Heart right ventricle (tissue), 16 donors: ENCODE measurements at regions of chr2 and their contacts with region 1.

Region 1: DNA sequence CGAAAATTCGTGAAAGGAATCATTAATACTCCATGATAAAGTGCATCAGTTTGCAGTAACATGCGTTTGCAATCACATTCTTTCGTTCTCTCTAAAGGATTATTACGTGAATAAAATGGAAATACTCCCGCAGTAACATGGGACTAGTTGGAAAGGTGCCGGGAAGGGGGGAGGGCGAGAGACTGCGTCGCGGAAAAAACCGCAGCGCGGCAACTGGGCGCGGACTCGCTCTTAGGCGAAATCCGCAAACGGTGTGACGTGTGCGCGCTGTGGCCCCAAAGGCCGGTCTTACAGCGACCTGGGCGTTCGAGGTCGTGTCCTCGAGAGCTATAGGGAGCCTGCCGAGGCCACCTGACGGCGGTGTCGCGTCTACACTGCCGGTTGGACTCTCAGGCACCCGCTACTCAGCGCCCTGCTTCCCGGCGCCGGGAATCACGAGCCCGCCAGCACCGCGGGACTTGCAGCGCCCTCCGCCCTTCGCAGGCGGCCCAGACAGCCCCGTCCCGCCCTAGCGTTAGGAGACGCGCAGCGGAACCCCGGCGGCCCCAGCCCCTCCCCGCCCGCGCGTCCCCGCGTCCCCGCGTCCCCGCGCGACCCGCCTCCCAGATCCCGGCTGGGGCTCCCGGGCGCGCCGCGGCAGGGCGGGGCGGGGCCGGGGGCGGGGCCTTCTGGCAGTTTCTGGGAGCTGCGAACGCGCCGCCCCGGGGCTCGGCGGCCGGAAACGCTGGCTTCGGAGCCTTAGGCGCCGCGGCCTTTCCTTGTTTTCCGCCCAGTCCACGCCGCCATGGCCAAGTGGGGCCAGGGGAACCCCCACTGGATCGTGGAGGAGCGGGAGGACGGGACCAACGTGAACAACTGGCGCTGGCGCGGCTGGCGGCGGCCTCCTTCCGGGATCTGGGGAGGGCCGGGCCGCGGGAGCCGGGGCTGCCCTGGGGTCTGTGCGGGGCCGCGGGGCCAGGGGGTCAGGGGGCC is 15.1 kb downstream of the C2orf74 start:
- DNase-seq: peak; percentile 94 to 97
- ATAC-seq: peak; percentile 87 to 95 (median 92)
- H3K4me3 ChIP-seq: peak overlapping the region; percentile 62 to 97 (median 86)
- H3K27ac ChIP-seq: peak overlapping the region; percentile 94 to 100 (median 98)
- H3K4me1 ChIP-seq: peaks cover 21 to 54% (median 47%) of the 10 kb centered on the region in 9 donors
- H3K27me3 ChIP-seq: no peaks in the 10 kb centered on the region
- CTCF ChIP-seq: peak in 3 of 9 donors; percentile 23 to 43 (median 34)

Region 2: DNA sequence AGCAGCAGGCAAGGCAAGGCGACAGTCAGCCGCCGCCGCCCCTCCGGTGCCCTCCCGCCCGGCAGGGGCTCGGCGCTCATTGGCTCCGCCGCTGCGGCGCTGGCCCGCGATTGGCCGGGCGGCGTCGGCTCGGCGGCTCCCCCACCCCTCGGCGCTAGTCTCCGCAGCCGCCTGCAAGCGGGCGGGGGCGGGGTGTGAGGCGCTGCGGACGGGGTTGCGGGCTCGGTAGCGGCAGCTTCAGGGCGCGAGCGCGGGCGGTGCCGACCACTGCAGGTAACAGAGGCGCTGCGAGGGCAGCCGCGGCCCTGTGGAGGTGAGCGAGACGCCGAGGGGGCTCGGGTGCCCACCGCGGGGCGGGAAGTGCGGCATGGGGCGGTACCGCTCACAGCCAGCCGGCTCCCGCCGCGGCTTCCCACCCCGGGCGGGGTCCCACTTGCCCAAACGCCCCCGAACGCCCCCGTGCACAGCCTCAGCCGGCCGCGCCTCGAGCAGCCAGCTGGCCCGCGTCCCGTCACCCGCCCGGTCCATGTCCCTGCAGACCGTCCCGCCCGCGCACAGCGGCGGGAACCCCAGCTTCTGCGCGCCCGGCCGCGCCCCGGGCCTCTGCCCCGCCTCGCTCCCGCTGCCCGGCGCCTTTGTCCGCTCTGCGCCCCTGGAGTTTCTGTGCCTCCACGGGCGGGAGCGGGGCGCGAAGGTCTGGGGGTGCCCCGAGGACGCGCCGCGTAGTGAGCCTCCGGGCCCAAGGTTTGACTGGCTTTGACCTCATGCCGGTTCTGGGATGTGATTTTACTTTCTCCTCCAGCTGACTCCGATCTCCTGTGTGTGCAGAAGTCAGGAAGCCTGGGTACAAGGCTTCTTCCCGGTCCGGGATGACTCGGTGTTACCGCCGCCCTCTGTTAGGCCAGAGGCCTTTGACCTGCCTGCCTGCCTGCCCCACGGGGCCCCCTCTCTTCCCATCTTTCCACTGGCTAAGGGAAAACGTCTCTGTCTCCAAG is 111.0 kb before region 1 on chr2 and contains the start of gene SANBR:
- intact Hi-C with region 1: loop called in 1 of 10 experiments (anchors 10 kb)
- DNase-seq: peak; percentile 85 to 88
- ATAC-seq: peak; percentile 98 to 99 (median 98)
- H3K4me3 ChIP-seq: peak within 1 kb of the TSS; percentile 73 to 98 (median 88)
- H3K27ac ChIP-seq: peak within 1 kb of the TSS; percentile 48 to 92 (median 87)
- H3K4me1 ChIP-seq: peaks cover 0 to 15% (median 8%) of the 10 kb centered on the region in 9 donors
- H3K27me3 ChIP-seq: no peaks in the 10 kb centered on the region
- CTCF ChIP-seq: peak in 1 of 9 donors; percentile 37
- total RNA-seq, gene SANBR: 5.3 to 9.2 (median 6.6) TPM

Region 3: GRCh38 chr2:61253136-61253535 is 76.1 kb after region 1 on chr2:
- intact Hi-C with region 1: loop called in 1 of 10 experiments (anchors 2 kb)
- DNase-seq: no peak
- ATAC-seq: no peak
- H3K4me3 ChIP-seq: no peak overlapping the region
- H3K27ac ChIP-seq: no peak overlapping the region
- H3K4me1 ChIP-seq: peaks cover 0 to 7% (median 0%) of the 10 kb centered on the region in 9 donors
- H3K27me3 ChIP-seq: no peaks in the 10 kb centered on the region
- CTCF ChIP-seq: no peak